WTC11 (cell line): ENCODE measurements at regions of chr19 and their contacts with region 1.

Region 1: GRCh38 chr19:29404951-29405727 is 120.7 kb upstream of the VSTM2B start:
- DNase-seq: peak; percentile 50
- ATAC-seq: peak; percentile 89
- H3K4me3 Mint-ChIP-seq: peak overlapping the region; percentile 20; the same call in 1 of the 2 replicates
- H3K27ac Mint-ChIP-seq: no peak overlapping the region; the same call in 1 of the 2 replicates
- H3K4me1 Mint-ChIP-seq: peaks cover 20% of the 10 kb centered on the region
- H3K27me3 Mint-ChIP-seq: peaks cover 4% of the 10 kb centered on the region
- CTCF ChIP-seq: no peak

Region 2: GRCh38 chr19:29393915-29394460 is 11.2 kb before region 1 on chr19:
- CTCF ChIA-PET with region 1: interaction called, 10 read pairs
- POLR2A ChIA-PET with region 1: no interaction called
- DNase-seq: no peak
- ATAC-seq: peak; percentile 75
- H3K4me3 Mint-ChIP-seq: no peak overlapping the region
- H3K27ac Mint-ChIP-seq: no peak overlapping the region
- H3K4me1 Mint-ChIP-seq: peaks cover 23% of the 10 kb centered on the region
- H3K27me3 Mint-ChIP-seq: no peaks in the 10 kb centered on the region; the same call in 1 of the 2 replicates
- CTCF ChIP-seq: no peak

Region 3: DNA sequence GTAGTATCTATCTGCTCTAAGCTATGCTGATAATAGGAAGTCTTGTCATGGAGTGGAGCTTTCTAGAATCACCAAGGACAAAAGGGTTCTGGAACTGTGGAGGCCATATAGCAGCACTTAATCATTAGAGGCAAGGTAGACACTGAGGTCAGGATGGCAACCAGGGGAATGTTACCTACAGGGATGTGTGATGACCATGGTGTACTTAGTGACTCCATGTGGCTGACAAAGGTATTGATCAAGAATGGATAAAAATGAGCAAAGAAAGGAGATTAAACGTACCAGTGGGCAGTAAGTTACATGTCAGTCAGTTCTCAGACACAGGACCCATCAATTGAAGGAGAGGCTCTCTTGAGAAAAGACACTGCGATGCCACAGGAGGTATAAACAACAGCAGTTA is 48.5 kb after region 1 on chr19:
- CTCF ChIA-PET with region 1: no interaction called
- POLR2A ChIA-PET with region 1: no interaction called
- DNase-seq: no peak
- ATAC-seq: peak; percentile 44
- H3K4me3 Mint-ChIP-seq: no peak overlapping the region
- H3K27ac Mint-ChIP-seq: no peak overlapping the region
- H3K4me1 Mint-ChIP-seq: peaks cover under 1% of the 10 kb centered on the region
- H3K27me3 Mint-ChIP-seq: peaks cover 15% of the 10 kb centered on the region
- CTCF ChIP-seq: no peak